ENCODE measurements at regions of chr5 and their contacts with region 1.

Region 1: DNA sequence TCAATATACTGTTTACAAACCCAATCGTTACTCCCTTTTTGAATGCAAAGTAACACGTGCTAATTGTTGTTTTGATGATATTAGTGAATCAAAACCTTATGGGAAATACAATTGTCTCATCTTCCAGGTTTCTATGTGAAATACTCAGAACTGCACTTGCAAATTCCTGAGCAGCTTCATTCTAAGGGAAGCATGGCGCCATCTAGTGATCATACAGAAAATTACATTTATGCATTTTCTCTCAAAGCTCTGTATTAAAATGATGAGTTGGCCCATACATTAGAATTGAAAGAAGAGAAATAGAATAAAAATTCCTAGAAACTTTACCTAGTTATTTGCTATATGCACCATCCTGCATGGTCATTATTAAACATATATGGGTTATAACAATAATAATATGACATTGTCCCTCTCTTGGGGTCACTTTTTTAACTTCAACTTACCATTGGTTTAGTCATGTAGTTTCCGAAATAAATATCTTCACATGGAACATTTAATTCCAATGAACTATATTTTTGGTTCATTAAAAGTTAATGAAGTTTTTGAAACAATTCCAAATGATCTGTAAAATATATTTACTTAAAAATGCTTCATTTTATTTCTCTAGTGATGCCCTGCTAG is 220.0 kb downstream of the PDE4D start:
- DNase-seq: no peak

Region 2: GRCh38 chr5:59390074-59390659 is 283.4 kb before region 1 on chr5:
- intact Hi-C with region 1: loop called (anchors 2 kb)
- DNase-seq: no peak

Region 3: GRCh38 chr5:59506285-59506877 is 167.2 kb before region 1 on chr5:
- intact Hi-C with region 1: loop called (anchors 5 kb)
- DNase-seq: no peak

Region 4: GRCh38 chr5:59528202-59528862 is 145.2 kb before region 1 on chr5:
- intact Hi-C with region 1: no loop called
- DNase-seq: no peak

Measured in cardiac septum (tissue), 1 donor.